ENCODE measurements at regions of chr11 and their contacts with region 1.

Region 1: GRCh38 chr11:114262681-114263512 is 33.3 kb upstream of the NNMT start:
- DNase-seq: peak in 4 of 14 experiments; percentile 10 to 58 (median 44)
- ATAC-seq: peak; percentile 52
- H3K4me3 ChIP-seq: no peak overlapping the region
- H3K4me3 Mint-ChIP-seq: no peak overlapping the region
- H3K27ac ChIP-seq: no peak overlapping the region
- H3K27ac Mint-ChIP-seq: no peak overlapping the region
- H3K4me1 ChIP-seq: peaks cover 5% of the 10 kb centered on the region
- H3K4me1 Mint-ChIP-seq: no peaks in the 10 kb centered on the region
- H3K27me3 ChIP-seq: peaks cover 3 to 11% of the 10 kb centered on the region in 2 experiments
- H3K27me3 Mint-ChIP-seq: peaks cover 15% of the 10 kb centered on the region
- CTCF ChIP-seq: peak; percentile 36

Region 2: GRCh38 chr11:113305440-113306336 is 957.2 kb before region 1 on chr11:
- CTCF ChIA-PET with region 1: interaction called, 3 read pairs
- POLR2A ChIA-PET with region 1: no interaction called
- intact Hi-C with region 1: loop called (anchors 2 to 5 kb)
- DNase-seq: peak; percentile 56 to 84 (median 68)
- ATAC-seq: peak; percentile 86
- H3K4me3 ChIP-seq: no peak overlapping the region
- H3K4me3 Mint-ChIP-seq: no peak overlapping the region
- H3K27ac ChIP-seq: no peak overlapping the region
- H3K27ac Mint-ChIP-seq: no peak overlapping the region
- H3K4me1 ChIP-seq: no peaks in the 10 kb centered on the region
- H3K4me1 Mint-ChIP-seq: no peaks in the 10 kb centered on the region
- H3K27me3 ChIP-seq: no peaks in the 10 kb centered on the region
- H3K27me3 Mint-ChIP-seq: peaks cover 5% of the 10 kb centered on the region
- CTCF ChIP-seq: peak; percentile 92

Region 3: GRCh38 chr11:113896156-113896879 is 366.6 kb before region 1 on chr11:
- CTCF ChIA-PET with region 1: interaction called, 83 read pairs
- POLR2A ChIA-PET with region 1: interaction called, 7 read pairs
- intact Hi-C with region 1: loop called (anchors 1 kb)
- DNase-seq: peak in 12 of 14 experiments; percentile 5 to 67 (median 22)
- ATAC-seq: peak; percentile 48
- H3K4me3 ChIP-seq: no peak overlapping the region
- H3K4me3 Mint-ChIP-seq: no peak overlapping the region
- H3K27ac ChIP-seq: no peak overlapping the region
- H3K27ac Mint-ChIP-seq: no peak overlapping the region
- H3K4me1 ChIP-seq: no peaks in the 10 kb centered on the region
- H3K4me1 Mint-ChIP-seq: no peaks in the 10 kb centered on the region
- H3K27me3 ChIP-seq: no peaks in the 10 kb centered on the region
- H3K27me3 Mint-ChIP-seq: no peaks in the 10 kb centered on the region
- CTCF ChIP-seq: peak; percentile 62

Region 4: GRCh38 chr11:114036156-114036811 is 226.6 kb before region 1 on chr11:
- CTCF ChIA-PET with region 1: interaction called, 33 read pairs
- POLR2A ChIA-PET with region 1: no interaction called
- intact Hi-C with region 1: loop called (anchors 1 kb)
- DNase-seq: peak; percentile 22 to 74 (median 49)
- ATAC-seq: peak; percentile 56
- H3K4me3 ChIP-seq: peak overlapping the region; percentile 19
- H3K4me3 Mint-ChIP-seq: no peak overlapping the region
- H3K27ac ChIP-seq: no peak overlapping the region
- H3K27ac Mint-ChIP-seq: no peak overlapping the region
- H3K4me1 ChIP-seq: peaks cover 10% of the 10 kb centered on the region
- H3K4me1 Mint-ChIP-seq: no peaks in the 10 kb centered on the region
- H3K27me3 ChIP-seq: peaks cover 0 to 3% of the 10 kb centered on the region in 2 experiments
- H3K27me3 Mint-ChIP-seq: no peaks in the 10 kb centered on the region
- CTCF ChIP-seq: peak; percentile 74

Region 5: DNA sequence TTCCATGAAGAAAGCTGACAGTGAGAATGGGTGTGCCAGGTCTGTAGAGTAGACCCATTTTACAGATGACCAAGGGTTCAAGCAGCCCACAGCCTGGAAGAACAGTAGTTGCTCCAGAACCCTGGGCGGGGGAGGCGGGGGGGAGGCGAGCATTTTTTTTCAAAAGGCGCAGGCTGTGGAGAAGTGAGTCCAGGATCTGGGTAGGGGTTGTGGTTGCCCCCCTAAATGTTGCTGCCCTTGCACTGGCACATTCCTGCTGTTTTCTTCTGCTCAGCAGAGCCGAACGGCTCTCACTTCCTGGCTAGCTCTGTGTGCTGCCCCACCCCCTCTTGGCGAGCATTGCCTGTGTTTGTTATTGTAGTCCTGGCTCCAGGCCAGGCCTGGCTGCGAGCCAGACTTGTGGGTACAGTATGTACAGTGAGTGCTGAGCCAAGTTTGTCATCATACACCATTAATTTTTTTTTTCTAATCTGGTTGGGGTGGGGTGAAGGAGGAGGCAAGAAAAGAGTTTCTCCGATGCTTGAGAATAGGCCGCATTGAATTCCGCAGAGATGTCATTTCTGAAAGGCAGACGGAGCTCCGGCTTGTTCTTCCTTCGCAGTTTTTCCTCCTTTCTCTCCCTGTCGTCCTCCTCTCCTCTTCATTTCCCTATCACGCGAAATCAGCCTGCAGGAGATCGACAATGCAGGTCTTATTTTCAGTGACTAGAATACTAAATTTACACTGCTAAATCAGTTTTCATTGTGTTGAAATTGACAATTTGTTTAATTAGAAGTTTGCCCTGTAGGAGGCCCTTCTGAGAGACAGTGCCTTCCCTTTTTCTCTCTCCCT is 102.9 kb before region 1 on chr11:
- CTCF ChIA-PET with region 1: interaction called, 7 read pairs
- POLR2A ChIA-PET with region 1: interaction called, 5 read pairs
- intact Hi-C with region 1: loop called (anchors 2 kb)
- DNase-seq: peak; percentile 96 to 99 (median 98)
- ATAC-seq: peak; percentile 97
- H3K4me3 ChIP-seq: peak overlapping the region; percentile 21
- H3K4me3 Mint-ChIP-seq: peak overlapping the region; percentile 66
- H3K27ac ChIP-seq: peak overlapping the region in 1 of 2 donors; percentile 55
- H3K27ac Mint-ChIP-seq: peak overlapping the region; percentile 79
- H3K4me1 ChIP-seq: peaks cover 82% of the 10 kb centered on the region
- H3K4me1 Mint-ChIP-seq: peaks cover 86% of the 10 kb centered on the region
- H3K27me3 ChIP-seq: no peaks in the 10 kb centered on the region
- H3K27me3 Mint-ChIP-seq: no peaks in the 10 kb centered on the region
- CTCF ChIP-seq: no peak